ENCODE measurements at regions of chr18 and their contacts with region 1.

Region 1: GRCh38 chr18:64882896-64883295 is 734.0 kb upstream of the LINC00305 start:
- DNase-seq: no peak
- ATAC-seq: no peak
- H3K4me3 ChIP-seq: no peak overlapping the region
- H3K27ac ChIP-seq: no peak overlapping the region
- H3K4me1 ChIP-seq: no peaks in the 10 kb centered on the region
- H3K27me3 ChIP-seq: no peaks in the 10 kb centered on the region
- CTCF ChIP-seq: no peak

Region 2: DNA sequence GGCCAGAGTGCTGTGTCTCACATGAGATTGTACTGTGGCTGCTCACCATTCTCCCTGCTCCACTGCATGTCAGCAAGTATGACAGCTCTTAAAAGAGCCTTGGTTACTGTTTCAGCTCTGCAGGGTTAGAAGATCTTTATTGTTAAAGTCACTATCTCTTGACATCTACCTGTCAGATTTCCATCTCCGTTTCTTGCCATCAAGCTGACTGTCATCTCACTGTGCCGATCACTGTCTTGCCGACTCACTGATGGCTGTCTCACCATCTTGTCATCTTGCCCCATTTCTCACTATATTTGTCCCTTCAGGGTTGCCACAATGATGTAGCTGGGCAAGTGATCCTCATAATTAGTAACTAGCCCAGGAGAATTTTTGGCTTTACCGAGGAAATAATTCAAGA is 67.0 kb after region 1 on chr18:
- intact Hi-C with region 1: no loop called
- DNase-seq: no peak
- ATAC-seq: no peak
- H3K4me3 ChIP-seq: no peak overlapping the region
- H3K27ac ChIP-seq: no peak overlapping the region
- H3K4me1 ChIP-seq: no peaks in the 10 kb centered on the region
- H3K27me3 ChIP-seq: no peaks in the 10 kb centered on the region
- CTCF ChIP-seq: no peak

Region 3: GRCh38 chr18:65227970-65228369 is 345.1 kb after region 1 on chr18:
- intact Hi-C with region 1: no loop called
- DNase-seq: no peak
- ATAC-seq: no peak
- H3K4me3 ChIP-seq: no peak overlapping the region
- H3K27ac ChIP-seq: no peak overlapping the region
- H3K4me1 ChIP-seq: no peaks in the 10 kb centered on the region
- H3K27me3 ChIP-seq: no peaks in the 10 kb centered on the region
- CTCF ChIP-seq: no peak

Region 4: GRCh38 chr18:65287652-65288051 is 404.8 kb after region 1 on chr18:
- intact Hi-C with region 1: loop called (anchors 10 kb)
- DNase-seq: no peak
- ATAC-seq: no peak
- H3K4me3 ChIP-seq: no peak overlapping the region
- H3K27ac ChIP-seq: no peak overlapping the region
- H3K4me1 ChIP-seq: no peaks in the 10 kb centered on the region
- H3K27me3 ChIP-seq: no peaks in the 10 kb centered on the region
- CTCF ChIP-seq: no peak

Measured in upper lobe of right lung (tissue), 1 donor.